HEK293 (cell line): ENCODE measurements at regions of chr5 and their contacts with region 1.

Region 1: DNA sequence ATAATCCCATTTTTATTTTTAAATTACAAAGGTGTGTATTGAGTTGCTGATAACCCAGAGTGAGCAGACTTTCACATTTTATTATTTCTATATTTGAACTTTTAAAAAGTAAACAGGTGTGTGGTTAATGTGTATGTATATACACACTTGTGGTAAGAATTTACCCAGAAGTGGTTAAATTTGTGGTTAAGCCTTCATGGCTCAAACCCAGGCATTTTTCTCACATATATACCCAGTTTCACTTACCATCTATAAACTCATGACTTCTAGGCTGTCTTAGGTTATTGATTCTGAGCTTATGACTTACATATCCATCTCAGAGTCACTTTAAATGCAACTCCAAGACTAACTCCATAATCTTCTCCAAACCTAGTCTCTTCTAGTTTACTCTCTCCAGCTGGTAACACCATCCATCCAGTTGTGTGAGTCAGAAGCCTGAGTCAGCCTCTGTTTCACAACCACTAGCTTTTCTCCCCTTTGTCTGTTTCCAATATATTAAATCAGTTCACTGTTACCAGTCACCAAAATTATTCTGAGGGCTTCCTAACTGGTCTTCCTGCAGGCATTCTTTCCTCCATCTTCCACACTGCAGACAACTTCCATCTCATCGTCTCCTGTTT is 20.2 kb downstream of the ZBED3 start:
- H3K4me3 ChIP-seq: no peak overlapping the region
- H3K27ac ChIP-seq: no peak overlapping the region
- H3K4me1 ChIP-seq: no peaks in the 10 kb centered on the region
- CTCF ChIP-seq: no peak

Region 2: GRCh38 chr5:77076961-77077823 is 10.3 kb after region 1 on chr5:
- CTCF ChIA-PET with region 1: interaction called, 14 read pairs
- POLR2A ChIA-PET with region 1: no interaction called
- H3K4me3 ChIP-seq: peak overlapping the region; percentile 34
- H3K27ac ChIP-seq: peak overlapping the region; percentile 85
- H3K4me1 ChIP-seq: peaks cover 3% of the 10 kb centered on the region
- CTCF ChIP-seq: no peak